PC-9 (cell line): ENCODE measurements at regions of chr7 and their contacts with region 1.

Region 1: GRCh38 chr7:17769918-17770317 is 170.4 kb downstream of the SNX13 start:
- DNase-seq: peak; percentile 57 to 71
- H3K4me3 ChIP-seq: no peak overlapping the region
- H3K27ac ChIP-seq: no peak overlapping the region
- H3K4me1 ChIP-seq: peaks cover 24% of the 10 kb centered on the region
- H3K27me3 ChIP-seq: no peaks in the 10 kb centered on the region
- CTCF ChIP-seq: peak; percentile 97

Region 2: DNA sequence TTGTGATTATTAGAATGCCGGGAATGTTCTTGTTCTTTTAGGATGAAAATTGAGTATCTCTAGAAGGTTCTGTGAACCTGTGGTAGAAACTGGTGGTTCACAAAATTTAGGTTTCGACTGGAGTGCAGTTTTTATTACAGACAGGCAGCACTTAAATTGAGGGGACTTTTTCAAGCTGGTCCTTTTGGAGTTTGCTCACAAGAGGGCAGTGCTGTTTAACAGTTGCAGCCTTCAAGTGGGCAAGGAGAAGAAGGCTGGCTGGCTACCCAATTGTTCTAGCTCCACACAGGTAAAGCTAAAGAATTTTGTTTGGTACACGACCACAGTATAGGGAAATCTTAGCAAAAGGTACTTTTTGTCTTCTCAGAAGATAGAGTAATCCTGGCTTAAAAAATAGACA is 63.2 kb before region 1 on chr7:
- CTCF ChIA-PET with region 1: no interaction called
- POLR2A ChIA-PET with region 1: interaction called, 4 read pairs
- intact Hi-C with region 1: loop called (anchors 5 kb)
- DNase-seq: peak; percentile 52 to 61
- H3K4me3 ChIP-seq: no peak overlapping the region
- H3K27ac ChIP-seq: no peak overlapping the region
- H3K4me1 ChIP-seq: no peaks in the 10 kb centered on the region
- H3K27me3 ChIP-seq: no peaks in the 10 kb centered on the region
- CTCF ChIP-seq: peak; percentile 92

Region 3: DNA sequence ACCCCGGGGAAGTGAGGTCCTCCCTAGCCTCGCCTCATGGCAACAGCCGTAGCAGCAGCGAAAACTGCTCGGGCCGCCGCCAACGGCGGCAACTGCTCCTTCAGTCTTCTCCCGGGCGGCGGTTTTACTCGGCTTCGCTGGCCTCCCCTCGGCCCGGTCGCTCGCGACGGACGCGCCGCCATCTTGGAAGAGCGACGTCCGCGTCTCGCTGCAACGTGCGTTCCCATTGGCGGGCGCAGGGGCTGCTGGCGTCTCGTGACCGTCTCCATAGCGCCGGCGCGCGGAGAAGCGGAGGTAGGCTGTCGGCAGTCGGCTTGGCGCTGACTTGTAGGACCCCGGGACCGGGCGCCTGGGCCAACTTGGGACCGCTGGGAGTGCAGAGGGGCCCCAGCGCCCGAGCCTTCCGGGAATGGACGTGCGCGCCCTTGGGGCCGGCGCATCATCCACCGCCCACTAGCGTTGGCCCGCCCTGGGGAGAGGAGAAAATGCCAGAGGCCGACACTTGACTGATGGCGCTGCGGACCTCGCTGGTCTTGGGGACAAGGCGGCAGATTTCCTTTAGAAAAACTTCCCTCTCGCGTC is 170.5 kb after region 1 on chr7 and contains the start of gene SNX13:
- CTCF ChIA-PET with region 1: no interaction called
- POLR2A ChIA-PET with region 1: no interaction called
- intact Hi-C with region 1: loop called (anchors 10 kb)
- DNase-seq: peak; percentile 87 to 91
- H3K4me3 ChIP-seq: peak within 1 kb of the TSS; percentile 81
- H3K27ac ChIP-seq: peak within 1 kb of the TSS; percentile 81
- H3K4me1 ChIP-seq: peaks cover 41% of the 10 kb centered on the region
- H3K27me3 ChIP-seq: no peaks in the 10 kb centered on the region
- CTCF ChIP-seq: peak; percentile 46
- total RNA-seq, gene SNX13: 48.8 and 56.3 TPM in 2 replicates

Region 4: GRCh38 chr7:18345641-18346234 is 575.8 kb after region 1 on chr7:
- CTCF ChIA-PET with region 1: interaction called, 9 read pairs
- POLR2A ChIA-PET with region 1: no interaction called
- intact Hi-C with region 1: loop called (anchors 1 kb)
- DNase-seq: peak in 1 of 2 experiments; percentile 51
- H3K4me3 ChIP-seq: no peak overlapping the region
- H3K27ac ChIP-seq: no peak overlapping the region
- H3K4me1 ChIP-seq: no peaks in the 10 kb centered on the region
- H3K27me3 ChIP-seq: no peaks in the 10 kb centered on the region
- CTCF ChIP-seq: peak; percentile 98